ENCODE measurements at regions of chr14 and their contacts with region 1.

Region 1: GRCh38 chr14:56491299-56492285 is 88.0 kb upstream of the TMEM260 start:
- DNase-seq: no peak
- H3K4me3 Mint-ChIP-seq: no peak overlapping the region
- H3K27ac Mint-ChIP-seq: no peak overlapping the region
- H3K4me1 Mint-ChIP-seq: peaks cover 4% of the 10 kb centered on the region
- H3K27me3 Mint-ChIP-seq: peaks cover 1% of the 10 kb centered on the region

Region 2: DNA sequence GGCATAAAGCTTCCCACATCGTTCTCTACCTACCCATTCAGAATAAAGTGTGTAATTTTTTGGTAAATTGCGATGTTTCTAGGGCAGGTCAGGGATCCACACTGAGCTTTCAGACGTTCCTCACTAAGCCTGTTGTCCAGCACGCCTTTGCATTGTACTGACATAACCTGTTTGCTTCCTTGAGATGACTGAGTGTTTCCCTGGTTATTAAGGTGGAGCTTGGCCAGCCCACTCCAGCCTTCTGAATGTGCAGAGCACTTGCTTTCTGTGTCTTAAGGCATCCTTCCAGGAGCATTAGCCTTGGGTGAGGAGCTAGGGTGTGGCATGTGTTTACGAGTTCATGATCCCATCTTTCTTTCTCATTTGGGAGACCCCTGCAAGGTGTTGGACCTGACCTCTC is 184.5 kb after region 1 on chr14:
- intact Hi-C with region 1: no loop called
- DNase-seq: no peak
- H3K4me3 Mint-ChIP-seq: no peak overlapping the region
- H3K27ac Mint-ChIP-seq: no peak overlapping the region
- H3K4me1 Mint-ChIP-seq: no peaks in the 10 kb centered on the region
- H3K27me3 Mint-ChIP-seq: no peaks in the 10 kb centered on the region

Region 3: DNA sequence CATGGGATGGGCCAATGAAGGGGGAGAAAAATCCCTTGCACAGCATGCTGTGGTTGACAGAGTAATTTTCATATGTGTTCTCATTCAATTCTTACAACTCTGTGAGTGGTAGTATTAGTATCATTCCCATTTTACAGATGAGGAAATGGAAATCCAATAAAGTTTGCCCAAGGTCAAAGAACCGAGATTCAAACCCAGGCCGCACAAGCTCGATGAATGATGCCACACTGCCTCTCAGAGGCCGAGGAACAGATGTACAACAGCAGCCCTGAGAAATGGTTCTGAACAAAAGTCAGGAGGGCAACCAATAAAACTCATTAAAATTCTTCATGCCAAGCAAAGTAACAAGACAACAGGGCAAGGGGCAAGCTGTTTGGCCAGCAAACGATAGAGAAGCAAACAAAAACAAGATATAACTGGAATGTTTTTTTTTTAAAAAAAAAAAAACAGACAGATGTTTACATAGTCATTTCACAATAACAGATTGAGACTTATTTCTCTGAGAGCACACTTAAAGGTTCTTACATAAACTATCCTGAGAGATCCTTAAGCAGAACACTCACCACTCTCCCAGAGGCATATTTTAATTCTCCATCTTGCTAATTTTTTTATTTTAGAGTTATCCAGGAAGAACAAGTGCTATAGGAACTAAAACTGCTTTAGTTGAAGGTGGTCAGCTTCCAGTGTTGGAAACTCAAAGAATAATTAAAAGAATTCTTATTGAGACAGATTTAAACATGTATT is 691.3 kb after region 1 on chr14:
- intact Hi-C with region 1: loop called (anchors 2 kb)
- DNase-seq: no peak
- H3K4me3 Mint-ChIP-seq: no peak overlapping the region
- H3K27ac Mint-ChIP-seq: no peak overlapping the region
- H3K4me1 Mint-ChIP-seq: no peaks in the 10 kb centered on the region
- H3K27me3 Mint-ChIP-seq: peaks cover 23% of the 10 kb centered on the region

Region 4: DNA sequence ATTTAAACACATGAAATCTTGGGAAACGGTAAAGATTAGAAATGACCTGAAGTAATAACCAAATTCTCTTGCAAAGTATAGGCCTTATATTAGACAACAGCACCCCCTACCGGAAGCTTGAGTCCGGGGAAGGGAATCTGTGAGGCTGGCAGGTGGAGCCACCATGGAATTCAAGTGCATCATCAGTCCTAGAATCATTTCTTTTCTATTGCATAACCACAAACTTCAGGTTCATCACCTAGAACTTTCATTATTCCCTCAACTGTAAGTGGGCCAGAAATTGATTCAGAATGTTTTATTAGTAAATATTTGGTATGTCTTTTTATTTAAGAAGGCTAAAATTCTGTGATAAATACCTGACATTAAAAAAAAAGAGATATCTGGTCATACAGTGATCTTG is 825.7 kb after region 1 on chr14:
- intact Hi-C with region 1: loop called (anchors 1 kb)
- DNase-seq: peak; percentile 38
- H3K4me3 Mint-ChIP-seq: no peak overlapping the region
- H3K27ac Mint-ChIP-seq: no peak overlapping the region
- H3K4me1 Mint-ChIP-seq: peaks cover 3% of the 10 kb centered on the region
- H3K27me3 Mint-ChIP-seq: peaks cover 2% of the 10 kb centered on the region